ENCODE measurements at regions of chr20 and their contacts with region 1.

Region 1: DNA sequence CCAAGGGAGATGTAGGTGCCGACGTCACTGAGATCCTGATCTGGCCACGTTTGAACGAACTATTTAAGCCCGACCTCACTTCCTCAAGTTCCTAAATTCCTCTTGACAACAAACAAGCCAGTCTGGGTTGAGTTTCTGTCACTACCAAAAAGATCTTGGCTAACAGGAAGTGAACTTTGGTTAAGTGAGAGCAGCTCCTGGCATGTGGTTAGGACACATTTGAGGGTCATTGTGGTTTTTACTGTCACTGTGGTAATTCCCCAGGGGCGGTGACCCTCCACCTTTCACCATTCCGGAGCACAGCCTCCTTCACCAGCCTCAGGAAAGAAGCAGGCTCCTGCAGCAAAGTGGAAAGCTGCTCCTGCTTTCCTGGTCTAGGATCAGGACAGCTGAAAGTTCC is 43.1 kb upstream of the ZNF831 start:
- DNase-seq: peak; percentile 48
- ATAC-seq: no peak
- H3K4me3 ChIP-seq: no peak overlapping the region
- H3K4me3 Mint-ChIP-seq: peak overlapping the region; percentile 91
- H3K27ac ChIP-seq: no peak overlapping the region
- H3K27ac Mint-ChIP-seq: peak overlapping the region; percentile 98
- H3K4me1 ChIP-seq: peaks cover 58 to 60% of the 10 kb centered on the region in 2 donors
- H3K4me1 Mint-ChIP-seq: peaks cover 68% of the 10 kb centered on the region
- H3K27me3 ChIP-seq: no peaks in the 10 kb centered on the region
- H3K27me3 Mint-ChIP-seq: no peaks in the 10 kb centered on the region
- CTCF ChIP-seq: no peak

Region 2: GRCh38 chr20:57709931-57710799 is 1410.3 kb before region 1 on chr20 and contains the start of gene PMEPA1:
- CTCF ChIA-PET with region 1: no interaction called
- POLR2A ChIA-PET with region 1: no interaction called
- intact Hi-C with region 1: loop called (anchors 10 kb)
- DNase-seq: peak; percentile 97
- ATAC-seq: peak; percentile 86
- H3K4me3 ChIP-seq: peak within 1 kb of the TSS; percentile 59 to 96 (median 83)
- H3K4me3 Mint-ChIP-seq: peak within 1 kb of the TSS; percentile 99
- H3K27ac ChIP-seq: peak within 1 kb of the TSS; percentile 80 to 99
- H3K27ac Mint-ChIP-seq: peak within 1 kb of the TSS; percentile 92
- H3K4me1 ChIP-seq: peaks cover 49 to 55% of the 10 kb centered on the region in 2 donors
- H3K4me1 Mint-ChIP-seq: peaks cover 53% of the 10 kb centered on the region
- H3K27me3 ChIP-seq: no peaks in the 10 kb centered on the region
- H3K27me3 Mint-ChIP-seq: no peaks in the 10 kb centered on the region
- CTCF ChIP-seq: no peak
- total RNA-seq, gene PMEPA1: 37.4 and 38.7 TPM in 2 replicates

Region 3: DNA sequence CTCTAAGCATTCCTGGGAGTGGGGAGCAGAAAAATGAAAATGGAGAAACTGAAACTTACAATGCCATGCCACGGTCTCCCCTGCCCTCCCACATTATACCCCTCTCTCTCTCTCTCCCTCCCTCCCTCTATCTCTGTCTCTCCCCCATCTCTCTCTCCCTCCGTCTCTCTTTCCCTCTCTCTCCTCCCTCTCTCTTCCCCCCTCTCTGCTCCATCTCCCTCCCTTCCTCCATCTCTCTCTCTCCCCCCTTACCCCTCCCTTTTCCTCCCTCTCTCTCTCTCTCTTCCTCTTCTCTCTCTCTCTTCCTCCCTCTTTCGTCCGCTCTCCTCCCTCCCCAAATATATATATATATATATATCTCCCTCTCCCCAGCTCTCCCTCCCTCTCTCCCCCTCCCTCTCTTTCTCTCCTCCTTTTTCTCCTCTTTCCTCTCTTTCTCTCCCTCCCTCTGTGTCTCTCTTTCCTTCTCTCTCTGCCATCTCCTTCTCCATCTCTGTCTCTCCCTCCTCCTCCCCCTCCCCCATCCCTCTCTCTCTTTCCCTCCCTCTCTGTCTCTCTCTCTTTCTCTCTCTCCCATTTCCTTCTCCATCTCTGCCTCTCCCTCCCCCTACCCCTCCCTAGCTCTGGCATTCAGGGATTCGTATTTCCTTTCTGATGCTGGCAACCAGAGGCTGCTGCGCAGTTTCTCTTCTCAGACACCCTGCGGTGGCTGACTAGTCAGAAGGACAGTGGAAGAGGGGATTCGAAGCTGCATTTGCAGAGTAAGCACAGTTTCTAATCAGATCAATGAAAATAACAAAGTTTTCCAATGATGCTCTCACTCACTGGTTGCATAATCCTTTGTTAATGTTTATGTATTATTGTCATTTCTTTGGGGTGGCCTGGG is 745.3 kb before region 1 on chr20:
- CTCF ChIA-PET with region 1: no interaction called
- POLR2A ChIA-PET with region 1: no interaction called
- intact Hi-C with region 1: no loop called
- DNase-seq: no peak
- ATAC-seq: no peak
- H3K4me3 ChIP-seq: no peak overlapping the region
- H3K4me3 Mint-ChIP-seq: no peak overlapping the region
- H3K27ac ChIP-seq: no peak overlapping the region
- H3K27ac Mint-ChIP-seq: no peak overlapping the region
- H3K4me1 ChIP-seq: no peaks in the 10 kb centered on the region
- H3K4me1 Mint-ChIP-seq: no peaks in the 10 kb centered on the region
- H3K27me3 ChIP-seq: peaks cover 0 to 12% (median 5%) of the 10 kb centered on the region in 4 experiments
- H3K27me3 Mint-ChIP-seq: peaks cover 28% of the 10 kb centered on the region
- CTCF ChIP-seq: no peak

Region 4: GRCh38 chr20:58883241-58883691 is 237.2 kb before region 1 on chr20:
- CTCF ChIA-PET with region 1: no interaction called
- POLR2A ChIA-PET with region 1: no interaction called
- intact Hi-C with region 1: no loop called
- DNase-seq: no peak
- ATAC-seq: no peak
- H3K4me3 ChIP-seq: no peak overlapping the region
- H3K4me3 Mint-ChIP-seq: no peak overlapping the region
- H3K27ac ChIP-seq: no peak overlapping the region
- H3K27ac Mint-ChIP-seq: no peak overlapping the region
- H3K4me1 ChIP-seq: peaks cover 18 to 23% of the 10 kb centered on the region in 2 donors
- H3K4me1 Mint-ChIP-seq: peaks cover 16% of the 10 kb centered on the region
- H3K27me3 ChIP-seq: no peaks in the 10 kb centered on the region
- H3K27me3 Mint-ChIP-seq: no peaks in the 10 kb centered on the region
- CTCF ChIP-seq: no peak

Region 5: DNA sequence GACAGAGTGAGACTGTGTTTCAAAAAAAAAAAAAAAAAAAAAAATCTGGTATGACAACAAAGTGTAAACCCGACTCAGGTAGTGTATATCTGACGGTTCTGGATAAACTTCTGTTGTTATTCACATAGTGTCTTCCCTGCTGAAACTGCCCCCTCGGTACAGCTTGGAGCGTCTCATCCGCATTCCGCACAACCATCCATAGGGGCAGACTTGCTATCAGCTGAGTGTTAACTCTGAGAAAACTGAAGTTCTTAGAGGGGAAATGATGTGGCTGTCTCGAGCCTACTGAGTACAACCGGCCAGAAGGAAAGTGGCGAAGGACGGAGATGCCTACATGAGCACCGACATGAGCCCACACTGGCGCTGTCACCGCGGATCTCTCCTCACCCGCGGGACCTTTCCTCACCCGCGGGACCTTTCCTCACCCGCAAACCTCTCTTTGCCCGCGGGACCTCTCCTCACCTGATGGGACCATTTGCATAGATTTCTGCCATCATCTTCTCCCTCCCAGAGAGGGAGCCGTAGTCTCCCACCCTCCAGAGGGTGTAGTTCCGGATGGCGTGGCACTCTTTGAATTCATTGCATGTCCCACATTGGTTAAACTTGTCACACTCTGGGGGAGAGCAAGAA is 123.2 kb before region 1 on chr20:
- CTCF ChIA-PET with region 1: no interaction called
- POLR2A ChIA-PET with region 1: no interaction called
- intact Hi-C with region 1: no loop called
- DNase-seq: no peak
- ATAC-seq: no peak
- H3K4me3 ChIP-seq: no peak overlapping the region
- H3K4me3 Mint-ChIP-seq: no peak overlapping the region
- H3K27ac ChIP-seq: no peak overlapping the region
- H3K27ac Mint-ChIP-seq: peak overlapping the region; percentile 68
- H3K4me1 ChIP-seq: peaks cover 22 to 38% of the 10 kb centered on the region in 2 donors
- H3K4me1 Mint-ChIP-seq: peaks cover 56% of the 10 kb centered on the region
- H3K27me3 ChIP-seq: no peaks in the 10 kb centered on the region
- H3K27me3 Mint-ChIP-seq: no peaks in the 10 kb centered on the region
- CTCF ChIP-seq: no peak

Region 6: GRCh38 chr20:59042796-59043660 is 77.5 kb before region 1 on chr20:
- CTCF ChIA-PET with region 1: no interaction called
- POLR2A ChIA-PET with region 1: interaction called, 5 read pairs
- intact Hi-C with region 1: loop called (anchors 2 kb)
- DNase-seq: peak; percentile 96
- ATAC-seq: peak; percentile 98
- H3K4me3 ChIP-seq: peak overlapping the region in 4 of 5 experiments; percentile 80 to 97 (median 86)
- H3K4me3 Mint-ChIP-seq: peak overlapping the region; percentile 94
- H3K27ac ChIP-seq: peak overlapping the region; percentile 69 to 89
- H3K27ac Mint-ChIP-seq: peak overlapping the region; percentile 93
- H3K4me1 ChIP-seq: peaks cover 45 to 47% of the 10 kb centered on the region in 2 donors
- H3K4me1 Mint-ChIP-seq: peaks cover 51% of the 10 kb centered on the region
- H3K27me3 ChIP-seq: no peaks in the 10 kb centered on the region
- H3K27me3 Mint-ChIP-seq: no peaks in the 10 kb centered on the region
- CTCF ChIP-seq: no peak

Region 7: GRCh38 chr20:59141787-59142581 is 21.5 kb after region 1 on chr20:
- CTCF ChIA-PET with region 1: interaction called, 6 read pairs
- POLR2A ChIA-PET with region 1: no interaction called
- intact Hi-C with region 1: loop called (anchors 2 kb)
- DNase-seq: no peak
- ATAC-seq: no peak
- H3K4me3 ChIP-seq: no peak overlapping the region
- H3K4me3 Mint-ChIP-seq: no peak overlapping the region
- H3K27ac ChIP-seq: no peak overlapping the region
- H3K27ac Mint-ChIP-seq: no peak overlapping the region
- H3K4me1 ChIP-seq: peaks cover 38 to 44% of the 10 kb centered on the region in 2 donors
- H3K4me1 Mint-ChIP-seq: peaks cover 59% of the 10 kb centered on the region
- H3K27me3 ChIP-seq: no peaks in the 10 kb centered on the region
- H3K27me3 Mint-ChIP-seq: no peaks in the 10 kb centered on the region
- CTCF ChIP-seq: no peak

Region 8: GRCh38 chr20:59159493-59160376 is 39.2 kb after region 1 on chr20:
- CTCF ChIA-PET with region 1: interaction called, 7 read pairs
- POLR2A ChIA-PET with region 1: interaction called, 6 read pairs
- intact Hi-C with region 1: loop called (anchors 1 kb)
- DNase-seq: peak; percentile 57
- ATAC-seq: peak; percentile 34
- H3K4me3 ChIP-seq: peak overlapping the region in 2 of 5 experiments; percentile 19 to 30
- H3K4me3 Mint-ChIP-seq: peak overlapping the region; percentile 66
- H3K27ac ChIP-seq: no peak overlapping the region
- H3K27ac Mint-ChIP-seq: peak overlapping the region; percentile 59
- H3K4me1 ChIP-seq: peaks cover 51 to 53% of the 10 kb centered on the region in 2 donors
- H3K4me1 Mint-ChIP-seq: peaks cover 58% of the 10 kb centered on the region
- H3K27me3 ChIP-seq: no peaks in the 10 kb centered on the region
- H3K27me3 Mint-ChIP-seq: peaks cover 3% of the 10 kb centered on the region
- CTCF ChIP-seq: no peak